Natural killer cell (primary cell): ENCODE measurements at regions of chr6 and their contacts with region 1.

Region 1: GRCh38 chr6:16770701-16771569 is 9.7 kb upstream of the ATXN1 start:
- DNase-seq: peak; percentile 71 to 91
- ATAC-seq: peak; percentile 58 to 84 (median 75)
- H3K4me3 ChIP-seq: no peak overlapping the region
- H3K4me3 Mint-ChIP-seq: peak overlapping the region; percentile 73
- H3K27ac ChIP-seq: no peak overlapping the region
- H3K27ac Mint-ChIP-seq: peak overlapping the region; percentile 72 to 75
- H3K4me1 ChIP-seq: peaks cover 23% of the 10 kb centered on the region
- H3K4me1 Mint-ChIP-seq: peaks cover 45 to 54% of the 10 kb centered on the region in 2 donors
- H3K27me3 ChIP-seq: no peaks in the 10 kb centered on the region
- H3K27me3 Mint-ChIP-seq: no peaks in the 10 kb centered on the region
- CTCF ChIP-seq: peak; percentile 92

Region 2: GRCh38 chr6:16731478-16732051 is 39.4 kb before region 1 on chr6:
- intact Hi-C with region 1: loop called (anchors 5 kb)
- DNase-seq: peak in 1 of 2 donors; percentile 62
- ATAC-seq: peak; percentile 78 to 87 (median 79)
- H3K4me3 ChIP-seq: no peak overlapping the region
- H3K4me3 Mint-ChIP-seq: peak overlapping the region; percentile 69
- H3K27ac ChIP-seq: peak overlapping the region; percentile 56
- H3K27ac Mint-ChIP-seq: peak overlapping the region; percentile 37 to 83
- H3K4me1 ChIP-seq: peaks cover 16% of the 10 kb centered on the region
- H3K4me1 Mint-ChIP-seq: peaks cover 35 to 46% of the 10 kb centered on the region in 2 donors
- H3K27me3 ChIP-seq: no peaks in the 10 kb centered on the region
- H3K27me3 Mint-ChIP-seq: no peaks in the 10 kb centered on the region
- CTCF ChIP-seq: no peak

Region 3: DNA sequence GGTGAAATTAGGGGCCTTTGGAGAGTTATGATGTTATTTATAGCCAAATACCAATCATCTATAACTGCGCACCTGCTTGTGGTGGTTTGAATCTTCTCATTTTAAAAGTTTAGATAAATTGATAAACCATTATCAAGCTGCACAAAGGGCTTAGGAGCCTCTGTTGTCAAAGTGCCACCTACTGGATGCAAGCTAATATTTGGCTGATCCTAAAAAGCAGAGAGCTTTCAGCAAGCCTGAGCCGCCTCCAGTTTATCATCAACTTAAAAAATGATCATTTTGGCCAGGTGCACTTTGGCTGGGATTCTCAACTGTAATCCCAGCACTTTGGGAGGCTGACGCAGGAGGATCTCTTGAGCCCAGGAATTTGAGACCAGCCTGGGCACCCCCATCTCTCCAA is 48.8 kb after region 1 on chr6:
- intact Hi-C with region 1: no loop called
- DNase-seq: peak in 1 of 2 donors; percentile 35
- ATAC-seq: no peak
- H3K4me3 ChIP-seq: no peak overlapping the region
- H3K4me3 Mint-ChIP-seq: no peak overlapping the region
- H3K27ac ChIP-seq: no peak overlapping the region
- H3K27ac Mint-ChIP-seq: no peak overlapping the region
- H3K4me1 ChIP-seq: no peaks in the 10 kb centered on the region
- H3K4me1 Mint-ChIP-seq: no peaks in the 10 kb centered on the region
- H3K27me3 ChIP-seq: peaks cover 3% of the 10 kb centered on the region
- H3K27me3 Mint-ChIP-seq: peaks cover 7 to 19% of the 10 kb centered on the region in 2 donors
- CTCF ChIP-seq: no peak

Region 4: DNA sequence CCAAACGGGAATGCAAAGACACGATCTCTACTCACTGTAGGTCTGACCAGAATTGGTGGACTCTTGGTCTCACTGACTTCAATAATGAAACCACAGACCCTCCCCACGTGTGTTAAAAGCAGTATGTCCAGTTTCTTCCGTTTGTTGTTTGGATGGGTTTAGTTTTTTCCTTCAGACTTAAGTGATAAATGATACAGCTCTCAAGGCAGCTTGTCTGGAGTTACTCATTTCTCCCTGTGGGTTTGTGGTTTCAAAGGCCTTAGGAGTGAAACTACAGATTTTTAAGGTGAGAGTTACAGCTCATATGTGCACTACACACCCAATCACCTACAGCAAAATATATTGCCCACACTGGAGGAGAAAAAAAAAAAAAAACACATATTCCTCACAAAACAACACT is 244.2 kb after region 1 on chr6:
- intact Hi-C with region 1: loop called (anchors 2 kb)
- DNase-seq: peak; percentile 18
- ATAC-seq: peak; percentile 17 to 59 (median 59)
- H3K4me3 ChIP-seq: no peak overlapping the region
- H3K4me3 Mint-ChIP-seq: peak overlapping the region; percentile 73
- H3K27ac ChIP-seq: no peak overlapping the region
- H3K27ac Mint-ChIP-seq: peak overlapping the region; percentile 45 to 91
- H3K4me1 ChIP-seq: peaks cover 17% of the 10 kb centered on the region
- H3K4me1 Mint-ChIP-seq: peaks cover 15 to 26% of the 10 kb centered on the region in 2 donors
- H3K27me3 ChIP-seq: no peaks in the 10 kb centered on the region
- H3K27me3 Mint-ChIP-seq: no peaks in the 10 kb centered on the region
- CTCF ChIP-seq: no peak